ENCODE measurements at regions of chr6 and their contacts with region 1.

Region 1: GRCh38 chr6:155327326-155328073 is 13.2 kb upstream of the TFB1M start:
- DNase-seq: peak; percentile 34 to 76 (median 66)
- ATAC-seq: peak; percentile 80
- H3K4me3 ChIP-seq: no peak overlapping the region
- H3K4me3 Mint-ChIP-seq: peak overlapping the region in 6 of 10 donors; percentile 0 to 40 (median 16)
- H3K27ac ChIP-seq: no peak overlapping the region
- H3K27ac Mint-ChIP-seq: peak overlapping the region; percentile 1 to 68 (median 15)
- H3K4me1 ChIP-seq: peaks cover 0 to 16% of the 10 kb centered on the region in 2 donors
- H3K4me1 Mint-ChIP-seq: peaks cover 3 to 21% (median 19%) of the 10 kb centered on the region in 7 donors
- H3K27me3 ChIP-seq: no peaks in the 10 kb centered on the region
- H3K27me3 Mint-ChIP-seq: no peaks in the 10 kb centered on the region

Region 2: GRCh38 chr6:154261688-154262397 is 1065.7 kb before region 1 on chr6:
- CTCF ChIA-PET with region 1: no interaction called
- POLR2A ChIA-PET with region 1: no interaction called
- intact Hi-C with region 1: no loop called
- DNase-seq: no peak
- ATAC-seq: no peak
- H3K4me3 ChIP-seq: no peak overlapping the region
- H3K4me3 Mint-ChIP-seq: no peak overlapping the region
- H3K27ac ChIP-seq: no peak overlapping the region
- H3K27ac Mint-ChIP-seq: peak overlapping the region in 1 of 9 donors; percentile 67
- H3K4me1 ChIP-seq: no peaks in the 10 kb centered on the region
- H3K4me1 Mint-ChIP-seq: peaks cover 9 to 47% (median 29%) of the 10 kb centered on the region in 7 donors
- H3K27me3 ChIP-seq: no peaks in the 10 kb centered on the region
- H3K27me3 Mint-ChIP-seq: peaks cover 0 to 15% (median 0%) of the 10 kb centered on the region in 5 donors

Region 3: GRCh38 chr6:155418017-155418761 is 90.7 kb after region 1 on chr6:
- CTCF ChIA-PET with region 1: interaction called, 3 read pairs
- POLR2A ChIA-PET with region 1: no interaction called
- intact Hi-C with region 1: loop called in 1 of 2 experiments (anchors 1 kb)
- DNase-seq: peak; percentile 9 to 87 (median 68)
- ATAC-seq: peak; percentile 89
- H3K4me3 ChIP-seq: peak overlapping the region; percentile 44
- H3K4me3 Mint-ChIP-seq: peak overlapping the region; percentile 77 to 89 (median 84)
- H3K27ac ChIP-seq: peak overlapping the region; percentile 84
- H3K27ac Mint-ChIP-seq: peak overlapping the region; percentile 93 to 99 (median 97)
- H3K4me1 ChIP-seq: peaks cover 6 to 15% of the 10 kb centered on the region in 2 donors
- H3K4me1 Mint-ChIP-seq: peaks cover 22 to 50% (median 38%) of the 10 kb centered on the region in 7 donors
- H3K27me3 ChIP-seq: no peaks in the 10 kb centered on the region
- H3K27me3 Mint-ChIP-seq: no peaks in the 10 kb centered on the region

Region 4: DNA sequence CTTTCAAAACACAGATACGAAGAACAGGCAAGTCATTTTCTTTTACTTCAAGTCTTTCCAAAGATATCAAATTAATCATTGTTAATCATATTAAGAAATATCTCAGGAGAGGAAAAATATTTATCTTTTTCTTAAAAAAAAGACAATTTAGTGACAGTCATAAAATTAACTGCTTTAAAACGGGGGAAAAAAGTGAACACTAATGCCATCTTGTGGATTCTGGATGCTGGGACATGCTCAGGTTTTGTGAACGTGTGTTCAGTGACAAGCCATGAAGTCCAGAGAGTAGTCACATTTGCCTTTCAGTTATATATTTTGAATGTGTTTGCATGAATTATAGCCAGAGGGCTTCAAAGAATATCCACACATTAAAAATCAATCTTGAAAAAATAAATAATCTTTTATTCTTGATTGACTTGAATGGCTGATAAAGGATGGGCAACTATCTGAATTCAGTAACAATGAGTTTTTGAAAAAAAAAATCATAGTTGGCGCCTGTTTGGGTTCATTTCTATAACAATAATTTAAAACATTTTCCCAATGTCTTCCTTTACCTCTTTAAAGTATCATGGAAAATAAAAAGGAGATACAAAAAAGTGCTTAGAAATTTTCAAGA is 202.8 kb after region 1 on chr6:
- CTCF ChIA-PET with region 1: interaction called, 10 read pairs
- POLR2A ChIA-PET with region 1: no interaction called
- intact Hi-C with region 1: loop called (anchors 1 kb)
- DNase-seq: peak in 5 of 9 donors; percentile 22 to 40 (median 30)
- ATAC-seq: no peak
- H3K4me3 ChIP-seq: no peak overlapping the region
- H3K4me3 Mint-ChIP-seq: no peak overlapping the region
- H3K27ac ChIP-seq: no peak overlapping the region
- H3K27ac Mint-ChIP-seq: no peak overlapping the region
- H3K4me1 ChIP-seq: no peaks in the 10 kb centered on the region
- H3K4me1 Mint-ChIP-seq: peaks cover 0 to 10% (median 7%) of the 10 kb centered on the region in 7 donors
- H3K27me3 ChIP-seq: no peaks in the 10 kb centered on the region
- H3K27me3 Mint-ChIP-seq: peaks cover 0 to 11% (median 0%) of the 10 kb centered on the region in 5 donors

Region 5: GRCh38 chr6:156564127-156564806 is 1236.8 kb after region 1 on chr6:
- CTCF ChIA-PET with region 1: no interaction called
- POLR2A ChIA-PET with region 1: no interaction called
- intact Hi-C with region 1: loop called (anchors 1 kb)
- DNase-seq: peak; percentile 54 to 76 (median 65)
- ATAC-seq: peak; percentile 95
- H3K4me3 ChIP-seq: no peak overlapping the region
- H3K4me3 Mint-ChIP-seq: peak overlapping the region in 1 of 10 donors; percentile 34
- H3K27ac ChIP-seq: no peak overlapping the region
- H3K27ac Mint-ChIP-seq: peak overlapping the region in 4 of 9 donors; percentile 21 to 49 (median 32)
- H3K4me1 ChIP-seq: peaks cover 0 to 3% of the 10 kb centered on the region in 2 donors
- H3K4me1 Mint-ChIP-seq: peaks cover 5 to 13% (median 7%) of the 10 kb centered on the region in 7 donors
- H3K27me3 ChIP-seq: no peaks in the 10 kb centered on the region
- H3K27me3 Mint-ChIP-seq: peaks cover 0 to 11% (median 8%) of the 10 kb centered on the region in 5 donors

Region 6: DNA sequence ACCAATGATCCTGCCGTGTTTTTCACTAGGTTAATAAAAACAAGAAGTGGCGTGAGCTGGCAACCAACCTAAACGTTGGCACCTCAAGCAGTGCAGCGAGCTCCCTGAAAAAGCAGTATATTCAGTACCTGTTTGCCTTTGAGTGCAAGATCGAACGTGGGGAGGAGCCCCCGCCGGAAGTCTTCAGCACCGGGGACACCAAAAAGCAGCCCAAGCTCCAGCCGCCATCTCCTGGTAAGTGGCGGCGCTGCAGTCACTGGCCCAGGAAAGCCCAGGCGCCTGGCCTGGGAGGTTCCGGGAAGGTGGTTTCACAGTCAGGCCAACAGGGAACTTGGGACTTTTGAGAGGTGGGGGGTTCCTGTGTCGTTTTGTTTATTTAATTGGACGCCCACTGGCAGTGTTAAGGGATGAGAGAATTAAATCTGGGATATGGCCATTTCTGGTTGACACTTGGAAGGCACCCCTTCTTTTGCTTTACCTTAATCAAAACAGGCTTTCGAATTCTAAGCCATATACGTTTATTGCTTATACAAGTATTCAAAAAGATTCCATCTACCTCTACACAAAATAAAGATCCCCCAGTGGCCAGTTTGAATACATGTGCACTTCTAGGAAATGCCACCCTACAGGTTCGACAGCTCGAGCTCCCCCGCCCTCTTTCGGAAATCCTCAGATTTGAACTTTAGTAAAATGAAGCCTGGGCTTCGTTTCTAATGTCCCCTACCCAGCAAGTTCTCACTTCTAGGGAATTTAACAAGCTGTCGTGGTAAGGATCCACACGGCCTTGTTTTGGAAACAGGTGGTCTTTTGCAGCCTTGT is 1856.9 kb after region 1 on chr6:
- CTCF ChIA-PET with region 1: interaction called, 3 read pairs
- POLR2A ChIA-PET with region 1: no interaction called
- intact Hi-C with region 1: loop called in 1 of 2 experiments (anchors 1 kb)
- DNase-seq: peak; percentile 33 to 66 (median 58)
- ATAC-seq: peak; percentile 80
- H3K4me3 ChIP-seq: no peak overlapping the region
- H3K4me3 Mint-ChIP-seq: peak overlapping the region in 1 of 10 donors; percentile 27
- H3K27ac ChIP-seq: no peak overlapping the region
- H3K27ac Mint-ChIP-seq: peak overlapping the region in 6 of 9 donors; percentile 33 to 55 (median 48)
- H3K4me1 ChIP-seq: peaks cover 0 to 7% of the 10 kb centered on the region in 2 donors
- H3K4me1 Mint-ChIP-seq: peaks cover 11 to 32% (median 22%) of the 10 kb centered on the region in 7 donors
- H3K27me3 ChIP-seq: no peaks in the 10 kb centered on the region
- H3K27me3 Mint-ChIP-seq: no peaks in the 10 kb centered on the region